Activated CD4-positive, alpha-beta T cell treated with anti-CD3 and anti-CD28 coated beads for 36 hours (primary cell): ENCODE measurements at regions of chr2 and their contacts with region 1.

Region 1: GRCh38 chr2:48420512-48421197 is 109.3 kb upstream of the STON1 start:
- DNase-seq: peak; percentile 97
- ATAC-seq: peak; percentile 93
- H3K4me3 Mint-ChIP-seq: peak overlapping the region; percentile 12
- H3K27ac Mint-ChIP-seq: peak overlapping the region; percentile 49
- H3K4me1 Mint-ChIP-seq: peaks cover 30% of the 10 kb centered on the region
- H3K27me3 Mint-ChIP-seq: peaks cover 2% of the 10 kb centered on the region

Region 2: DNA sequence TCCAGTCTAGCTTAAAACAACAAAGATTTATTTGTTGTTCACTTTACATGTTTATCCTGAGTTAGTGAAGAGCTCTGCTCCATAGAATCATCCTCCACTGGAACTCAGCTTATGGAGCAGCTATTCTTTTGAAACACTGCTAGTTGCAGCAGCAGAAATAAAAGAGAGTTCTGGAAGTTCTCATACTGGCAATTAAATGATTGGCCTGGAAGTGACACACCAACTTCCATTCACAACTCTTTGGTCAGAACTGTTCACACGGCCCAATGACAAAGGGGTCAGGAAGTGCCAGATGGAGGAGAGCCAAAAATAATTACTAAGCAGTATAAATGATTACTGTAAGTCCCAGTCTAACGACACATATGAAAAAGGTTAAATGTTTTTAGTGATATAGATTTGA is 553.5 kb before region 1 on chr2:
- CTCF ChIA-PET with region 1: no interaction called
- POLR2A ChIA-PET with region 1: no interaction called
- intact Hi-C with region 1: loop called in 1 of 2 experiments (anchors 2 kb)
- DNase-seq: no peak
- ATAC-seq: no peak
- H3K4me3 Mint-ChIP-seq: no peak overlapping the region
- H3K27ac Mint-ChIP-seq: peak overlapping the region; percentile 24
- H3K4me1 Mint-ChIP-seq: peaks cover 85% of the 10 kb centered on the region
- H3K27me3 Mint-ChIP-seq: no peaks in the 10 kb centered on the region

Region 3: GRCh38 chr2:48107326-48107925 is 313.2 kb before region 1 on chr2:
- CTCF ChIA-PET with region 1: interaction called, 5 read pairs
- POLR2A ChIA-PET with region 1: no interaction called
- intact Hi-C with region 1: loop called in 1 of 2 experiments (anchors 1 kb)
- DNase-seq: no peak
- ATAC-seq: no peak
- H3K4me3 Mint-ChIP-seq: no peak overlapping the region
- H3K27ac Mint-ChIP-seq: no peak overlapping the region
- H3K4me1 Mint-ChIP-seq: peaks cover 17% of the 10 kb centered on the region
- H3K27me3 Mint-ChIP-seq: no peaks in the 10 kb centered on the region

Region 4: DNA sequence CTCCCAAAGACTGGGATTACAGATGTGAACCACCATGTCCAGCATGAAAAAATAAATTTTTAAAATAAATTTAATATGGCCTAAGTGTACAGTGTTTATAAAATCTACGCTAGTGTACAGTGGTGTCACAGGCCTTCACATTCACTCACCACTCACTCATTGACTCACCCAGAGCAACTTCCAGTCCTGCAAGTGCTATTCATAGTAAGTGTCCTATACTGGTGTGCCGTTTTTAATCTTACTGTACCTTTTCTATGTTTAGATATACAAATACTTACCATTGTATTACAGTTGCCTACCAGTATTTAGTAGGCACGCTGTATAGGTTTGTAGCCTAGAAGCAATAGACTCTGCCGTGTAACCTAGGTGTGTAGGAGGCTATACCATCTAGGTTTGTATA is 182.3 kb before region 1 on chr2:
- CTCF ChIA-PET with region 1: no interaction called
- POLR2A ChIA-PET with region 1: no interaction called
- intact Hi-C with region 1: no loop called
- DNase-seq: no peak
- ATAC-seq: no peak
- H3K4me3 Mint-ChIP-seq: no peak overlapping the region
- H3K27ac Mint-ChIP-seq: no peak overlapping the region
- H3K4me1 Mint-ChIP-seq: peaks cover 10% of the 10 kb centered on the region
- H3K27me3 Mint-ChIP-seq: no peaks in the 10 kb centered on the region

Region 5: GRCh38 chr2:48248241-48248933 is 172.3 kb before region 1 on chr2:
- CTCF ChIA-PET with region 1: no interaction called
- POLR2A ChIA-PET with region 1: no interaction called
- intact Hi-C with region 1: loop called (anchors 1 kb)
- DNase-seq: peak; percentile 34
- ATAC-seq: peak; percentile 94
- H3K4me3 Mint-ChIP-seq: no peak overlapping the region
- H3K27ac Mint-ChIP-seq: no peak overlapping the region
- H3K4me1 Mint-ChIP-seq: peaks cover 12% of the 10 kb centered on the region
- H3K27me3 Mint-ChIP-seq: no peaks in the 10 kb centered on the region

Region 6: GRCh38 chr2:48343571-48344440 is 76.8 kb before region 1 on chr2:
- CTCF ChIA-PET with region 1: interaction called, 4 read pairs
- POLR2A ChIA-PET with region 1: no interaction called
- intact Hi-C with region 1: loop called in 1 of 2 experiments (anchors 1 kb)
- DNase-seq: no peak
- ATAC-seq: peak; percentile 95
- H3K4me3 Mint-ChIP-seq: peak overlapping the region; percentile 40
- H3K27ac Mint-ChIP-seq: peak overlapping the region; percentile 78
- H3K4me1 Mint-ChIP-seq: peaks cover 50% of the 10 kb centered on the region
- H3K27me3 Mint-ChIP-seq: no peaks in the 10 kb centered on the region

Region 7: GRCh38 chr2:48377646-48378045 is 43.0 kb before region 1 on chr2:
- CTCF ChIA-PET with region 1: no interaction called
- POLR2A ChIA-PET with region 1: no interaction called
- intact Hi-C with region 1: loop called in 1 of 2 experiments (anchors 5 kb)
- DNase-seq: no peak
- ATAC-seq: no peak
- H3K4me3 Mint-ChIP-seq: no peak overlapping the region
- H3K27ac Mint-ChIP-seq: no peak overlapping the region
- H3K4me1 Mint-ChIP-seq: no peaks in the 10 kb centered on the region
- H3K27me3 Mint-ChIP-seq: no peaks in the 10 kb centered on the region

Region 8: GRCh38 chr2:49129034-49129433 is 708.4 kb after region 1 on chr2:
- CTCF ChIA-PET with region 1: no interaction called
- POLR2A ChIA-PET with region 1: no interaction called
- intact Hi-C with region 1: no loop called
- DNase-seq: no peak
- ATAC-seq: no peak
- H3K4me3 Mint-ChIP-seq: no peak overlapping the region
- H3K27ac Mint-ChIP-seq: no peak overlapping the region
- H3K4me1 Mint-ChIP-seq: no peaks in the 10 kb centered on the region
- H3K27me3 Mint-ChIP-seq: peaks cover 2% of the 10 kb centered on the region